ENCODE measurements at regions of chr3 and their contacts with region 1.

Region 1: GRCh38 chr3:155323063-155323666 is 29.7 kb upstream of the STRIT1 start:
- H3K4me3 ChIP-seq: no peak overlapping the region
- H3K27ac ChIP-seq: no peak overlapping the region
- H3K4me1 ChIP-seq: no peaks in the 10 kb centered on the region
- CTCF ChIP-seq: 0 out of 2 replicates have a peak, but pooled peaks have one; percentile 24

Region 2: DNA sequence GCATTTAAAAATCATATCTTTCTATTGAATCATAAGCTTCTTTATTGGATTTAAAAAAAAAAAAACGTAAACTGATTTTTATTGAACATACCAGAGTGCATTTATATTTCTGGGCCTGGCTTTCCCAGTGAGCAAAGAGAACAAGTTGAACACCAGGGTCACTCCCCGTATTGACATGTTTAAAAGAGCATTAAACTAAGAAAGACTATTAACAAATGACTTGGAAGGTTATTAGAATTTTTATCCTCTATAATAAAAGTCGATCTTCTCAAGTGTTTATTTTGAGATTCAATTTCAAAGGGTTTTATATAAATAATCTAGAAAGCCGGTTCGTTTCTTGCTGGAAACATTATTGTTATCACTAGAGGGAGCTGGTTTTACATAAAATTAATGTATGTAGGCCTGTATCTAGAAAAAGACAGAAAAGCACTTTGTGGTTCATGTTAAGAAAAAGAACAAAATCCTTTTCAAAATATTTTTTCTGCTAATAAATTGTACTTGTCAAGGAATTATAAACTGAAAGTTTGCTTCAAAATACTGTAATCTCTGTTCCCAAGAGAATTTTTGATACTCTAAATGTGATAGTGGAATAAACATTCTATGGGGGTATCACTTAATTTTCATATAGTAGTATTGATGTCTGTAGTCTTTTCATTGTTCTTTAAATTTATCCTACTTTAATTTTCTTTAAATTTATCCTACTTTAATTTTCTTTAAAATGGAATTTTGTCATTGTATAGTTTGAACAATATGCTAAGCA is 564.9 kb before region 1 on chr3:
- CTCF ChIA-PET with region 1: interaction called, 12 read pairs
- POLR2A ChIA-PET with region 1: no interaction called
- H3K4me3 ChIP-seq: no peak overlapping the region
- H3K27ac ChIP-seq: no peak overlapping the region
- H3K4me1 ChIP-seq: no peaks in the 10 kb centered on the region
- CTCF ChIP-seq: no peak

Region 3: DNA sequence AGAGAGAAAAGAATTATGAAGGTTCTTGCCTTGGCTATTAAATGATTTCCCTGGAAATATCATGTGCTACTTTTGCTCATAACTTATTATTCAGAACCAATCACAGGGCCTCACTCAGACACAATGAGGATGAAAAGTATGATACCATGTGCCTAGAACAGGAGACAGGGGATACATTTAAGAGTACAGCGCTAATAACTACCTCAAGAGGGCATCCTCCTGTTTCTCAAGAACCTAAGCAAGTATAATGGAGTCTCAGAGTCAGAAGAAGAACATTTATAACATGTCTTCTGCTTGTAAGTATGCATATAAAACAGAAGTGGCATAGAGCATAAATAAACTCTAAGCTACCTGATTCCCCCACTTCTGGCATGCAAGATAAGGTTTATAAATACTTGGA is 368.4 kb before region 1 on chr3:
- CTCF ChIA-PET with region 1: interaction called, 32 read pairs
- POLR2A ChIA-PET with region 1: no interaction called
- H3K4me3 ChIP-seq: no peak overlapping the region
- H3K27ac ChIP-seq: no peak overlapping the region
- H3K4me1 ChIP-seq: no peaks in the 10 kb centered on the region
- CTCF ChIP-seq: no peak

Region 4: DNA sequence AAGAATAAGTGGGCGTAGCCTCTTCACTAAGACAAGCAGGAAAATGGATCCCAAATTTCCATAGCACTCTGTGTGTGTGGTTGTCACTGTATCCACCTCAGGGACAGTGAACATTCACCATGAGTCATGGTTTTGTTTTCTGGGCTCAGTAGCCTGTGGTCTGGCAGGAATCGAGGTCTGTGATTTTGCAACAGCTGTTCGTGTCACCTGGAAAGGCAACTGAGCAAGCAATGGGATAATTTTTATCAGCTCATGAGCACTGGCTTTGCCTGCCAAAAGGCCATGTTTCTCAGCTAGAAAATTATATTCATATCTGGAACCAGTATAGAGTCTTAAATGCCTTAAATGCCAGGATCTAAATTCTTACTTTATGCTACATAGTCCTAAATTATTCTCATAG is 90.6 kb before region 1 on chr3:
- CTCF ChIA-PET with region 1: no interaction called
- POLR2A ChIA-PET with region 1: no interaction called
- H3K4me3 ChIP-seq: no peak overlapping the region
- H3K27ac ChIP-seq: no peak overlapping the region
- H3K4me1 ChIP-seq: no peaks in the 10 kb centered on the region
- CTCF ChIP-seq: no peak

Region 5: DNA sequence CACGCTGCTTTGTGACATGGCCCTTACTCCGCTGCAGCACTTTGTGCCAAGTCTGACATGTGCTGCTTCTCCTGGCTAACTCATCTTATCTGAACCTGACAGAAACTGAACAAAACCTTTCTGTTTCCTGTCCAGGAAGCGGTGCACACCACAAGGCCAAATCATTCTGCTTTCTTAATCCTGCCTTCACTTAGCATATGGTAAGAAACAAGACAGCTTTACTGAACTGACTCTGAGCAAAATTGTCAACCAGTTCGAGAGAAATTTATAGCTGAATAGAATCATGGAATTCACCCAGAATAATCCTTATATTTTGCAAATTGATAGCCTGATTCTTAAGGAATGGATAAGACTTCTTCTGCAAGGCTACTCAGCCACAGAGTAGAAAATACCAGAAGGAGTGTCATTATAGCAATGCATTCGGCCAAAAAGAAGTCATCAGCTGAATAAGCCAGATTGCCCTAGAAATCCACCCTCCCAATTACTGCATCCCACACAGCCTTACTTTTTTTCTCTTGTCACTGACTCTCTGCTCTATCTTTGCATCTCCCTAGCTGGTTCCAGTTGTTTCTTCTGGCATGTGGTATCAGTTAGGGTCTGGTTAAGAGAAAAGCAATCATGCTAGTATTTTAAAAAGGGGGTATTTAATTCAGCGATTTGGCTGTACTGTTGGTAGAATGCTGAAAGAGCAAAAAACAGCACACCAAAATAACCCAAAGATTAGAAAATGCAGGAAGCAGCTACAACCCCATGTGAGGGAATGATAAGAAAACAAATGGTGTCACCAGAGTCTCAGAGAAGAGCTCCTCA is 12.0 kb after region 1 on chr3:
- CTCF ChIA-PET with region 1: interaction called, 10 read pairs
- POLR2A ChIA-PET with region 1: no interaction called
- H3K4me3 ChIP-seq: no peak overlapping the region
- H3K27ac ChIP-seq: no peak overlapping the region
- H3K4me1 ChIP-seq: no peaks in the 10 kb centered on the region
- CTCF ChIP-seq: no peak

Region 6: DNA sequence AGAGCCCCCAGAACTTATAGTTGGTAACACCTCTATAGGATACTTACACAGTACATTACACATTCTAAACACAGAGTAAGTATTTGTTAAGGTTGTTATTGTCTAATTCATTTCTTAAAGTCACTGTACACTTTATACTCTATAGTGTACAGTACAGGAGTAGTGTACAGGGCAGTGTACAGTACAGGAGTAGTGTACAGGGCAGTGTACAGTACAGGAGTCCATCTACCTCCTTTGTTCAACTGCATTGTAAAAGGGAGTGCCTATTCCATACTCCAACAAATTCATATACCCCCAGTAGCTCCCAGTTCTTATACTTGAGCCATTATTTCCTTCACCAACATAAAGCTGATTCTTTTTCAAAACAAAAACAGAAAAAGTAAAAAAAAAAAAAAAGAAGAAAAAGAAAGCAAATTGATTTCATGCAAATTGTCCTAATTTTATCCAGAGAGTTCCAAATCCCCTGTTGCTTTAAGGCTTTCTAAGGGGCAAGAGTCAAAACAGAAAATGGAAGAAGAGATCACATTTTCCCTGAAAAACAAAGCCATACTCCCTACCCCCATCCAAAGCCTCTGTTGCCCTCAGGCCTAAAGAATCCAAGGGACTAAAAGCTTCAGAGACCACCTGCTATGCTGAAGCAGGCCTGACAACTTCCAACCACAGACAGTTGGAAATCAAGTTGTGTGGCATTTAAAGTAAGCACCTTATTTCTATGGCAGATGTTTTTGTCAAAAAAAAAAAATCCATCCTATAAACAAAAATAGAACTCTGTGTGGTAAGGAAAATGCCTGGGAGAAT is 296.2 kb after region 1 on chr3:
- CTCF ChIA-PET with region 1: no interaction called
- POLR2A ChIA-PET with region 1: no interaction called
- H3K4me3 ChIP-seq: no peak overlapping the region
- H3K27ac ChIP-seq: no peak overlapping the region
- H3K4me1 ChIP-seq: no peaks in the 10 kb centered on the region
- CTCF ChIP-seq: no peak